Aorta (tissue), 5 donors: ENCODE measurements at regions of chr2 and their contacts with region 1.

Region 1: GRCh38 chr2:151999053-151999452 is 99.8 kb downstream of the CACNB4 start:
- DNase-seq: peak in 1 of 2 donors; percentile 59
- ATAC-seq: no peak
- H3K4me3 ChIP-seq: no peak overlapping the region
- H3K27ac ChIP-seq: no peak overlapping the region
- H3K4me1 ChIP-seq: peaks cover 2 to 6% of the 10 kb centered on the region in 2 donors
- H3K27me3 ChIP-seq: no peaks in the 10 kb centered on the region

Region 2: GRCh38 chr2:151819920-151820319 is 179.1 kb before region 1 on chr2:
- intact Hi-C with region 1: loop called (anchors 5 kb)
- DNase-seq: no peak
- ATAC-seq: no peak
- H3K4me3 ChIP-seq: no peak overlapping the region
- H3K27ac ChIP-seq: no peak overlapping the region
- H3K4me1 ChIP-seq: peaks cover 4 to 5% of the 10 kb centered on the region in 2 donors
- H3K27me3 ChIP-seq: no peaks in the 10 kb centered on the region

Region 3: GRCh38 chr2:151828143-151828889 is 170.7 kb before region 1 on chr2 and contains the start of gene ARL5A:
- intact Hi-C with region 1: loop called (anchors 5 kb)
- DNase-seq: peak; percentile 97 to 99
- ATAC-seq: peak; percentile 98
- H3K4me3 ChIP-seq: peak within 1 kb of the TSS; percentile 85 to 87
- H3K27ac ChIP-seq: peak within 1 kb of the TSS; percentile 72 to 79
- H3K4me1 ChIP-seq: peaks cover 0 to 5% of the 10 kb centered on the region in 2 donors
- H3K27me3 ChIP-seq: no peaks in the 10 kb centered on the region
- total RNA-seq, gene ARL5A: 78.9 to 95.9 TPM

Region 4: GRCh38 chr2:151946899-151947822 is 51.9 kb before region 1 on chr2:
- intact Hi-C with region 1: loop called (anchors 5 kb)
- DNase-seq: peak in 1 of 2 donors; percentile 53
- ATAC-seq: peak; percentile 85
- H3K4me3 ChIP-seq: peak overlapping the region; percentile 3 to 69
- H3K27ac ChIP-seq: peak overlapping the region; percentile 84 to 94
- H3K4me1 ChIP-seq: peaks cover 0 to 12% of the 10 kb centered on the region in 2 donors
- H3K27me3 ChIP-seq: no peaks in the 10 kb centered on the region

Region 5: DNA sequence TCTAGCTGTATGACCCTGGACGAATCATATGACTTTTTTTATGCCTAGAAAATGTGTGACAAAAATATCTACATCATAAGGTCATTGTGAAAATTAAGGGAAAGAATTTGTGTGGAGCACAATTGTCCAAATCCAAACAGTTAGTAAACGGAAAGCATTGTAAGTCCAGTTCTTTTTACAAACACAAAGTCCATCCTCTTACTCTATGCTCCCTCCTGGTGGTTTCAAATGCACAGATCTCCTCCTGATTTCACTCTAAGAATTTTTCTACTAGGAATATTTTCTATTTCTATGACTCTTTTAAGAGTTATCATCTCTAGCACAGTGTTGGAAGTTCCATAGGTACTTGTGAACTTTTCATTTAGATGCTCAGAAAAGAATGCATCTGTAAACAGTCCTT is 45.6 kb before region 1 on chr2:
- intact Hi-C with region 1: loop called (anchors 5 kb)
- DNase-seq: no peak
- ATAC-seq: no peak
- H3K4me3 ChIP-seq: no peak overlapping the region
- H3K27ac ChIP-seq: no peak overlapping the region
- H3K4me1 ChIP-seq: peaks cover 2 to 3% of the 10 kb centered on the region in 2 donors
- H3K27me3 ChIP-seq: no peaks in the 10 kb centered on the region

Region 6: GRCh38 chr2:151961558-151961957 is 37.5 kb before region 1 on chr2:
- intact Hi-C with region 1: loop called in 1 of 2 experiments (anchors 2 kb)
- DNase-seq: no peak
- ATAC-seq: no peak
- H3K4me3 ChIP-seq: no peak overlapping the region
- H3K27ac ChIP-seq: no peak overlapping the region
- H3K4me1 ChIP-seq: peaks cover 0 to 11% of the 10 kb centered on the region in 2 donors
- H3K27me3 ChIP-seq: no peaks in the 10 kb centered on the region

Region 7: DNA sequence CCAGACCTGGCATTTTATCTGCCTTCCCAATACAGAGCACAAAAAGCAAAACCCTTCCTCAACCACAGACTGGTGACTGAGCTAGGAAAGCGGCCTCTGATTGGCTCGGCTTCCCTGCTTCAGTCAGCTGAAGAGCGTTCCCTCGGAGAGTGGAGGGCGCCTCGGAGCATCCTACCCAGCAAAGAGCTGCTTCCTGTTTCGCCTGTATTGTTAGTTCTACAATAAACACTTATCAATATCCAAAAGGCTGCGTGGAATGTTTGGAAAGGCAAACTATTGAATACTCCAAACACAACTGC is 25.2 kb before region 1 on chr2:
- intact Hi-C with region 1: no loop called
- DNase-seq: peak in 1 of 2 donors; percentile 60
- ATAC-seq: peak; percentile 49
- H3K4me3 ChIP-seq: no peak overlapping the region
- H3K27ac ChIP-seq: no peak overlapping the region
- H3K4me1 ChIP-seq: no peaks in the 10 kb centered on the region
- H3K27me3 ChIP-seq: no peaks in the 10 kb centered on the region

Region 8: GRCh38 chr2:152036611-152037469 is 37.8 kb after region 1 on chr2:
- intact Hi-C with region 1: no loop called
- DNase-seq: peak in 1 of 2 donors; percentile 71
- ATAC-seq: no peak
- H3K4me3 ChIP-seq: no peak overlapping the region
- H3K27ac ChIP-seq: no peak overlapping the region
- H3K4me1 ChIP-seq: no peaks in the 10 kb centered on the region
- H3K27me3 ChIP-seq: no peaks in the 10 kb centered on the region